ENCODE measurements at regions of chr5 and their contacts with region 1.

Region 1: GRCh38 chr5:147949711-147950573 is 43.6 kb upstream of the C5orf46 start:
- DNase-seq: no peak
- H3K4me3 ChIP-seq: no peak overlapping the region
- H3K27ac ChIP-seq: no peak overlapping the region
- H3K4me1 ChIP-seq: no peaks in the 10 kb centered on the region
- H3K27me3 ChIP-seq: no peaks in the 10 kb centered on the region
- CTCF ChIP-seq: peak; percentile 67

Region 2: DNA sequence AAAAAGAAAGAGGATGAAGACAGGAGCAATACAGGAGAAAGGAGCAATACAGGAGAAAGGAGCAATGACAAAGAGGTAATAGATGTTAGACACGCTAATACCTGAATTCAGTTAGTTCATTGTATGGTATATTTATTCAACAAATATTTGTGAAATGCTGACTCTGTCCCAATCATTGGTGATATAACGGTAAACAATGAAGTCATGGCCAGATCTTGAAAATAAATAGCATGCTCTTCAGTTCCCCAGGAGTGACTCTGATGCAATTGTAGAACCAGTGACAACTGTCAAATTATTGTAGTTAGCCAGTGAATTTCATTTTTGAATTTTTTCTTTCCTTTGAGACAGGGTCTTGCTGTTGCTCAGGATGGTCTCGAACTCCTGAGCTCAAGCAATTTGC is 170.4 kb after region 1 on chr5:
- intact Hi-C with region 1: loop called (anchors 5 kb)
- DNase-seq: no peak
- H3K4me3 ChIP-seq: no peak overlapping the region
- H3K27ac ChIP-seq: no peak overlapping the region
- H3K4me1 ChIP-seq: no peaks in the 10 kb centered on the region
- H3K27me3 ChIP-seq: no peaks in the 10 kb centered on the region
- CTCF ChIP-seq: no peak